Right cardiac atrium (tissue), 5 donors: ENCODE measurements at regions of chr7 and their contacts with region 1.

Region 1: GRCh38 chr7:151351027-151351426 is 9.4 kb downstream of the NUB1 start:
- DNase-seq: no peak
- ATAC-seq: no peak
- H3K4me3 ChIP-seq: no peak overlapping the region
- H3K27ac ChIP-seq: no peak overlapping the region
- H3K4me1 ChIP-seq: peaks cover 4% of the 10 kb centered on the region
- H3K27me3 ChIP-seq: no peaks in the 10 kb centered on the region

Region 2: GRCh38 chr7:151315038-151315655 is 35.9 kb before region 1 on chr7:
- intact Hi-C with region 1: loop called (anchors 2 to 5 kb)
- DNase-seq: peak; percentile 61 to 71 (median 70)
- ATAC-seq: peak; percentile 79 to 81
- H3K4me3 ChIP-seq: no peak overlapping the region
- H3K27ac ChIP-seq: no peak overlapping the region
- H3K4me1 ChIP-seq: peaks cover 2% of the 10 kb centered on the region
- H3K27me3 ChIP-seq: no peaks in the 10 kb centered on the region